Pancreas (tissue), 10 donors: ENCODE measurements at regions of chr15 and their contacts with region 1.

Region 1: DNA sequence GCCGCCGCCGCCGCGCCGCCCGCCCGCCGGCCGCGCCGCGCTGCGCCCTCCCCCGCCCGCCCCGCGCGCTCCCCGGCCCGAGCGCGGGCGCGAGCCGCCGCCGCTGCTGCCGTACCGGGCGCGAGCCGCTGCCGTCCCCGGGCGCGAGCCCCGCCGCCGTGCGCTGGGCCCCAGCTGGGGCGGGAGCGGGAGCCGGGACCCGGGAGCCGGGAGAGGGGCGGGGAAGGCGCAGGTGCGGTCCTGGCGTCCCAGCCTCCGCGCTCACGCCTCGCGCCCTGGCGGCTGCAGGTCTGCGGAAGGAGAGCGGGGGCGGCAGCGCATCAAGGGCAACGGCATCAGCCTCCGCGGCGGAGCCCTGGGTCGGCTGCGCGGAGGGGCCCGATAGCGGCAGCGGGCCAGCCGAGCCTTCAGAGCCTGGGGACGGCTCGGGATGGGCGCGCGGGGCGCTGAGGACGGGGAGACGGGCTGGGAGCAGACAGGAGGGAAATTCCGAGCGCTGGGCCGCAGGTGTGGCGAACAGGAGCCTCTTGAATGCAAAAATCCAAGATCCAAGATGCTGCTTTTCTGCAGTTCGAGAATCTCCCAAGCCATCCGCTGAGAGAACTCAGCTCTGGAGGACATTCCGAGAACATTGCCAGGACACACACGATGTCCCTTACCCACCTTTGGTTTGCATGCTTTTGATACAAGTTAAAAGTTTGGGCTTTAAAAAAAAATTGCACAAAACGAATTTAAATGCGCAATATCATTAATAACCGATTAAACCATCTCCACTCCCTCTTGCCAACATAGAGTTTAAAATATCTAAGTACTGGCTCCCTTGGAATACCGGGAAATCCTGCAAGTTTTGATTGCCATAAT is 251.1 kb downstream of the TJP1 start:
- DNase-seq: peak; percentile 44 to 84 (median 66)
- ATAC-seq: peak; percentile 60 to 76 (median 72)
- H3K4me3 ChIP-seq: peak overlapping the region; percentile 35 to 62 (median 48)
- H3K27ac ChIP-seq: peak overlapping the region in 2 of 4 donors; percentile 41 to 71
- H3K4me1 ChIP-seq: peaks cover 0 to 7% (median 0%) of the 10 kb centered on the region in 3 donors
- H3K27me3 ChIP-seq: peaks cover 0 to 6% (median 1%) of the 10 kb centered on the region in 4 donors
- CTCF ChIP-seq: no peak

Region 2: DNA sequence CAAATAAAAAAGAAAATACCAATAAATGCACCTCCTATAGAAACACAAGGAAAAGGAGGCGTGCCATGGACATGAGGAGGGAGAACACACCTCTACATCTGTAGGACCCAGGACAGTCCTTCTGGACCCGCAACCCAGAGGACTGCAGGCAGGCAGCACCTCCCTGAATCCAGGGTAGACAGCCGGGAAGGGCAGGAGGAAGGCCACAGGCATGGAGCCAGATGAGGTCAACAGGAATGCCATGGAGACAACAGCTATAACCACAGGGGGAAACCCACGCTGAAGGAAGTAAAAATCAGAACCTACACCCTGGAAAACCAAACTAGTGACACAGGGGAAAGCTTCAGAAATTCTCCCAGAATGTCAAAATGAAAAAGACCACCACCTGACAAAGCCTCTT is 52.7 kb before region 1 on chr15:
- intact Hi-C with region 1: loop called in 1 of 3 experiments (anchors 10 kb)
- DNase-seq: peak in 2 of 6 donors; percentile 30 to 37
- ATAC-seq: peak in 3 of 4 donors; percentile 55 to 75 (median 70)
- H3K4me3 ChIP-seq: no peak overlapping the region
- H3K27ac ChIP-seq: peak overlapping the region in 2 of 4 donors; percentile 10 to 35
- H3K4me1 ChIP-seq: peaks cover 0 to 5% (median 0%) of the 10 kb centered on the region in 3 donors
- H3K27me3 ChIP-seq: no peaks in the 10 kb centered on the region
- CTCF ChIP-seq: no peak

Region 3: GRCh38 chr15:29623116-29623639 is 52.0 kb after region 1 on chr15:
- intact Hi-C with region 1: no loop called
- DNase-seq: no peak
- ATAC-seq: no peak
- H3K4me3 ChIP-seq: no peak overlapping the region
- H3K27ac ChIP-seq: no peak overlapping the region
- H3K4me1 ChIP-seq: no peaks in the 10 kb centered on the region
- H3K27me3 ChIP-seq: no peaks in the 10 kb centered on the region
- CTCF ChIP-seq: no peak